ENCODE measurements at regions of chr14 and their contacts with region 1.

Region 1: GRCh38 chr14:61894452-61895077 is 132.3 kb downstream of the SNAPC1 start:
- DNase-seq: peak; percentile 67
- H3K4me3 ChIP-seq: peak overlapping the region in 1 of 2 experiments; percentile 31; a peak in 1 of 4 replicates
- H3K27ac ChIP-seq: no peak overlapping the region
- H3K4me1 ChIP-seq: no peaks in the 10 kb centered on the region
- H3K27me3 ChIP-seq: peaks cover 12% of the 10 kb centered on the region; the same call in 1 of the 2 replicates
- CTCF ChIP-seq: peak; percentile 74
- EP300 ChIP-seq: no peak
- RAD21 ChIP-seq: peak; percentile 85

Region 2: GRCh38 chr14:61584331-61584741 is 310.2 kb before region 1 on chr14:
- CTCF ChIA-PET with region 1: no interaction called
- POLR2A ChIA-PET with region 1: no interaction called
- DNase-seq: no peak
- H3K4me3 ChIP-seq: no peak overlapping the region
- H3K27ac ChIP-seq: peak overlapping the region; percentile 92 to 99
- H3K4me1 ChIP-seq: peaks cover 34 to 38% of the 10 kb centered on the region in 2 experiments
- H3K27me3 ChIP-seq: no peaks in the 10 kb centered on the region
- CTCF ChIP-seq: no peak
- EP300 ChIP-seq: no peak
- RAD21 ChIP-seq: no peak

Region 3: DNA sequence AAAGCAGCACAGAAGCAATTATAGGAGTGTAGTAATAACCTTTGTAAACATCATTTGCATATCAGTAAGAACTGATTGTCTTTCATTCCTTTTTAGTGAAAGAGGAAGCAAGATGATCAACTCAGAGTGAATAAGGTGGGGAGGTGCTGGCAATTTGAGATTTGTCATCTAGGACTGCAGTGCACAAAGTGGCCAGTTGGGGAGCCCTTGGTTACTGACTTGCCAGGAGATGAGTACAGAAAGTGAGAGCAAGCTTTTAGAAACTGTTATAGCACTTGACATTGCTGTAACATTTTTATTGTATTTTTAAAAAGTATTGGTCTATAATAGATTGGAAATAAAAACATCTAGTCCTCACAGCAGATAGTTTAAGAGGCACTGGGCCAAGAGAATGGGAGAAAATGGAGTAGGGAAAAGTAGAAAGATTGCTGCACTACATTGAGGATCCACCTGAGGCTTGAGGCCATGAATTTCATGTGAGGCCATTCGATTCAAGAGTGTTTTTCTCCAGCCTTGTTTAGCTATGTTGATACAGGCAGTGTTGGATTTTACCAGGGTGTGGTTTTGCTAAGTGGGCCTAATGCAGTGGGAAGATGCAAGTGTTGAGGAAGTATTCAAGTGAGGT is 34.2 kb before region 1 on chr14:
- CTCF ChIA-PET with region 1: interaction called, 12 read pairs
- POLR2A ChIA-PET with region 1: no interaction called
- DNase-seq: peak; percentile 65
- H3K4me3 ChIP-seq: no peak overlapping the region
- H3K27ac ChIP-seq: no peak overlapping the region
- H3K4me1 ChIP-seq: no peaks in the 10 kb centered on the region
- H3K27me3 ChIP-seq: peaks cover 4% of the 10 kb centered on the region; the same call in 1 of the 2 replicates
- CTCF ChIP-seq: peak; percentile 72
- EP300 ChIP-seq: no peak
- RAD21 ChIP-seq: peak; percentile 58

Region 4: GRCh38 chr14:61872452-61872851 is 22.1 kb before region 1 on chr14:
- CTCF ChIA-PET with region 1: interaction called, 27 read pairs
- POLR2A ChIA-PET with region 1: no interaction called
- DNase-seq: no peak
- H3K4me3 ChIP-seq: no peak overlapping the region
- H3K27ac ChIP-seq: no peak overlapping the region
- H3K4me1 ChIP-seq: peaks cover 0 to 13% of the 10 kb centered on the region in 2 experiments; a peak in 1 of 4 replicates
- H3K27me3 ChIP-seq: peaks cover 11% of the 10 kb centered on the region
- CTCF ChIP-seq: no peak
- EP300 ChIP-seq: no peak
- RAD21 ChIP-seq: no peak

Measured in SK-N-SH (cell line).